Activated T-helper 1 cell treated with anti-CD3 and anti-CD28 coated beads, Interleukin-12 subunit alpha, Interleukin-12 subunit beta, Interleukin-2, Interleukin-4 antibody, amounts not matched to agents 30 ng/mL and 10 ng/mL and 1 ng/mL, durations not matched to agents 14 hours and 24 hours and 36 hours (primary cell): ENCODE measurements at regions of chr1 and their contacts with region 1.

Region 1: DNA sequence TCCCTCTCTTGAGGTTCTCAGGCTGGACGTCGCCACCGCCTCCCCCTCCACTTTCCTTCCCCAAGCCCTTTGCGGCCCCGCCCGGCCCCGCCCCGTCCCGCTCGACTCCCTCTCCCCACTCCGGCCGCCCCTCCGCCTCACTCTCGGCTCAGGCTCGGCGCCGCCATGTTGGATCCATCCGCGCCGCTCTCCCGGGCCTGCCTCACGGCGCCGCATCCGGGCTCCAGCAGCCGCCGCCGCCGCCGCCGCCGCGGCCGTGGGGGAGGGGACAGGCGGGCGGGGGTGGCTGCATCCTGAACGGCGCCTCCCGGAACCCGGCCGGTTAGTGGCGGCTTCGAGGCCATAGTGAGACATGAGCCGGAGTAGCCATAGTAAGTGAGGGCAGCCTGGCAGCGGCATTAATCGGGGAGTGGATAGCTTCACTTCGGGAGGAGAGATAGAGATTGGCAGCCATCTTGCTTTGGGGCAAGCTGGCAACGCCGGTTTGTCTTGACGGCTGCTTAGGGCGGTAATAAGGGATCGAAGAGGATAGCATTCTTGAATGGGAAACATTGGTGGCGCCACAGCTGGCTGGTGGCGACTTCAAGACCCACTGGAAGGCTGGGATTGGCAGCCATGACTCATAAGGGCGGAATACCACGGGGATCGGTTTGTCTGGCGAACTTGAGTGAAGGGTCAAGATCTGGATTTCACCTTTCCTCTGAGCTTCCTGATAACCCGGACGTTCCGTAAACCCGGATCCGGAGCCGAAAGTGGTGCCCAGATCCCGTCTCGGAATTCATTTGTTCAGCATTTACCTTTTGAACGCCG is at the start of gene DEDD:
- DNase-seq: peak; percentile 87
- H3K4me3 Mint-ChIP-seq: no peak within 1 kb of the TSS
- H3K27ac Mint-ChIP-seq: peak within 1 kb of the TSS; percentile 90
- H3K4me1 Mint-ChIP-seq: peaks cover 46% of the 10 kb centered on the region
- H3K27me3 Mint-ChIP-seq: no peaks in the 10 kb centered on the region
- total RNA-seq, gene DEDD: 44.5 and 48.0 TPM in 2 replicates

Region 2: DNA sequence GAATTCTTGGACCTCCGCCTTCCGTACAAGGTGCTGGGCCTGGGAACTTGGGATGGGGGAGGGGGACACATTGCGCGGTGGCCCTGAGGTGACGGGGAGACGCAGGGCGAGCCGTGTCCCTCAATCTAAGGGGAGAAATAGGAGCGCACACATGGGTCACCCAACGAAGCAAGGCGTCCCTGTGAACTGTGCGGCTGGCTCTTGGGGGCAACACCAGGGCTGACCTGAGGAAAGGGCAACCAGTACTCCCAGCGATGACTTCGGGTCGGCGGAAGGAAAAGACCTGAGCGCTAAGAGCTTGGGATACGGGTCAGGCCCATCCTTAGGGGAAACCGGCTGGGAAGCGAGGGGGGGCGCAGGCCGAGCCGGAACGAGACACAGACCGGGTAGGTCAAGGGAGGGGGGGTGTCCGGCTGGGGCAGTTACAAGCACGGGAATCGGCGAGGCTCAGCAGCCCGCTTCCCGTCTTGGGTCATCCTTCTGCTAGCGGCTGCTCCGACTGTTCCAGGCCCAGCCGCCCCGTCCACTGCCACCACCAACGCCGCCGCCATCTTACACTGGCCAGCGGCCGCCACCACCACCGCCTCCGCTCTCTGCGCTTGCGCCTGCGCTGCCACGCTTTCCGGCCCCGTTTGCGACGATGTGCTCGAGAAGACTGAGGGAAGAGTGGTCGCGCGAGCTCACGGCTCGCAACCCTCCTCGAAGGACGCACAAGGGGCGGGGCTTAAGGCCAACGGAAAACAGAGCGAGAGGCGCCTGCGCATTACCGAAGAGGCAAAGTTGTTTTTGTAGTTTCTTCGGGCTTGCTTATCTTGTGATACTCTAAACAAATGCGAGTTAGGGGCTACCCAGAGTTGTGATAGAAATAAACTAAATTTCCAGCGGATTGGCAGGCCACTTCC is 870.5 kb before region 1 on chr1 and contains the start of gene DCAF8:
- intact Hi-C with region 1: loop called (anchors 10 kb)
- DNase-seq: peak; percentile 98
- H3K4me3 Mint-ChIP-seq: peak within 1 kb of the TSS; percentile 95
- H3K27ac Mint-ChIP-seq: peak within 1 kb of the TSS; percentile 99
- H3K4me1 Mint-ChIP-seq: peaks cover 51% of the 10 kb centered on the region
- H3K27me3 Mint-ChIP-seq: no peaks in the 10 kb centered on the region
- total RNA-seq, gene DCAF8: 112 and 117 TPM in 2 replicates

Region 3: DNA sequence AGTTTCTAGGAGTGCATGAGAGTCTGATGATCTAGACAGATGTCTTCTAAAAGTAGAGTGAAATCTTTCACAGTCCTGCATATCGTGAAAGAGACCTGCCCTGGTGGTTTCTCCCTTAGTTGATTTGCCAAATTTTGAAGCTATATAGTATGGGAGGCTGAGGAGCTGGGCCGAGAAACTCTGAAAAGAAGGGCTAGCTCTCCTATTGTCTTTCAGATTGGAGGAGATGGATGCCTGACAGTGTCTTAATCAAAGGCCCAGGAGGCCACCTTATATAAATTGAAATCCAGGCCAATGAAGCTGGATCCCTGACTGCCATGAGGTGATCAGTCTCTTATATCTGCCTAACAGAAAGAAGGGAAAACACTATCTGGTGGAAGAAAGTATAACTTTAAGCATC is 534.9 kb before region 1 on chr1:
- intact Hi-C with region 1: no loop called
- DNase-seq: no peak
- H3K4me3 Mint-ChIP-seq: no peak overlapping the region
- H3K27ac Mint-ChIP-seq: no peak overlapping the region
- H3K4me1 Mint-ChIP-seq: peaks cover 6% of the 10 kb centered on the region
- H3K27me3 Mint-ChIP-seq: peaks cover 2% of the 10 kb centered on the region

Region 4: DNA sequence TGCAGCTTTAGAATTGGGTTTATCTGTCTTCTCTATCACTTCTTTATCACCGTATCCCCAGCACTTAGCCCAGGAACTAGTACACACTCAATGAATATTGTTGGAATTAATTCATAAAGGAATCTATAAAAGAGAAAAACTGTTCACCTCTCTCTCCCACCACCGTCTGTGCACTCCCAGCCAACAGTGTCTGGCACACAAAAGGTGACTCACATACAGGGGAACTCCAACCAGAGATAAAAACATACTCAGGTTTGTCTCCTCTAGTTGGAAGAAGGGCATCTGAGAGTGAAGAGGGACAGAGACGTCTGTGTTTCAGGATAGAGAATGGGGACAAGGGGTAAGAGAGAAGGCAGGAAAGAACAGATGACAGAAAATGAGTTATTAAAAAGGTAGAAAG is 257.7 kb before region 1 on chr1:
- intact Hi-C with region 1: no loop called
- DNase-seq: no peak
- H3K4me3 Mint-ChIP-seq: no peak overlapping the region
- H3K27ac Mint-ChIP-seq: no peak overlapping the region
- H3K4me1 Mint-ChIP-seq: peaks cover 16% of the 10 kb centered on the region
- H3K27me3 Mint-ChIP-seq: peaks cover 2% of the 10 kb centered on the region

Region 5: GRCh38 chr1:161071886-161072371 is 60.7 kb before region 1 on chr1:
- intact Hi-C with region 1: loop called (anchors 1 kb)
- DNase-seq: peak; percentile 24
- H3K4me3 Mint-ChIP-seq: no peak overlapping the region
- H3K27ac Mint-ChIP-seq: peak overlapping the region; percentile 47
- H3K4me1 Mint-ChIP-seq: peaks cover 49% of the 10 kb centered on the region
- H3K27me3 Mint-ChIP-seq: no peaks in the 10 kb centered on the region

Region 6: DNA sequence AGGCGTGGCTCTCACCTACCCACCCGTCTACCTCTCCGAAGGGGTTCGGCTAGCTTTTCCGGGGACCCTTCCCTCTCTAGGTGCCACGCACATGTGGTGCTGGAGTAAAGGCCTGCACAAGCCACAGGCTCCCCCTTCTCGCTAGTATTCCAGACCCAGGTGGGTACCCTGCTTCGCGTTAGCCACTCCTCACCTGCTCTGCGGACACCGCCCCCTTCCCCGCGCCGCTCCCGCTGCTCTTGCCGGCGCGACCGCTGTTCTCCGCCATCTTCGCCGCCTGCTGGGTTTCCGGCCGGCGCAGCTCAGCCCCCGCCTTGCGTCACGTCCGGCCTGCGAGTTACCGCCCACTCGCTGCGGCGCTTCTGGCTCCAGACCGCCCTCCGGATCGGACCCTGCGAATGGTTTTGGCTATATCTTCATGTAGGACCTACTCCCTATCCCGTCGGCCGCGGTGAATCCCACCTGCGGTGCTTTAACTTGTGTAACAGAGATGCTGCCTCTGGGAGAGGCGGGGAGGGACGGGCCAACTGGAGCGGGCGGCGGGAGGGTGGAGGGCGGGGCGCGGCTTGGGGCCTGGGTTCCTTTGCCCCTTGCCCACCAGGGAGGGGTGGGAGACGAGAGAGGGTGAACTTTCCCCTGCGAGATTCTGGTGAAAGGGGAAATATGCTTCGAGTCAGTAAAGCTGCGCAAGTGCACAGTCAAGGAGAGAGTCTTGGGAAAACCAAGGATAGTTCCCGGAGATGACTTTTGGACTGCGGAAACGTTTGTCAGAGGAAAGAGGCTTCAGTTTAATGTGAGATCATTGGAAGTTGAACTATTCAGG is 14.6 kb before region 1 on chr1 and contains the starts of genes NIT1 and PFDN2:
- intact Hi-C with region 1: loop called (anchors 1 kb)
- DNase-seq: peak; percentile 84
- H3K4me3 Mint-ChIP-seq: peak within 1 kb of the TSS; percentile 97
- H3K27ac Mint-ChIP-seq: peak within 1 kb of the TSS; percentile 96
- H3K4me1 Mint-ChIP-seq: peaks cover 75% of the 10 kb centered on the region
- H3K27me3 Mint-ChIP-seq: no peaks in the 10 kb centered on the region
- total RNA-seq, gene NIT1: 51.3 and 56.3 TPM in 2 replicates
- total RNA-seq, gene PFDN2: 147 and 164 TPM in 2 replicates

Region 7: DNA sequence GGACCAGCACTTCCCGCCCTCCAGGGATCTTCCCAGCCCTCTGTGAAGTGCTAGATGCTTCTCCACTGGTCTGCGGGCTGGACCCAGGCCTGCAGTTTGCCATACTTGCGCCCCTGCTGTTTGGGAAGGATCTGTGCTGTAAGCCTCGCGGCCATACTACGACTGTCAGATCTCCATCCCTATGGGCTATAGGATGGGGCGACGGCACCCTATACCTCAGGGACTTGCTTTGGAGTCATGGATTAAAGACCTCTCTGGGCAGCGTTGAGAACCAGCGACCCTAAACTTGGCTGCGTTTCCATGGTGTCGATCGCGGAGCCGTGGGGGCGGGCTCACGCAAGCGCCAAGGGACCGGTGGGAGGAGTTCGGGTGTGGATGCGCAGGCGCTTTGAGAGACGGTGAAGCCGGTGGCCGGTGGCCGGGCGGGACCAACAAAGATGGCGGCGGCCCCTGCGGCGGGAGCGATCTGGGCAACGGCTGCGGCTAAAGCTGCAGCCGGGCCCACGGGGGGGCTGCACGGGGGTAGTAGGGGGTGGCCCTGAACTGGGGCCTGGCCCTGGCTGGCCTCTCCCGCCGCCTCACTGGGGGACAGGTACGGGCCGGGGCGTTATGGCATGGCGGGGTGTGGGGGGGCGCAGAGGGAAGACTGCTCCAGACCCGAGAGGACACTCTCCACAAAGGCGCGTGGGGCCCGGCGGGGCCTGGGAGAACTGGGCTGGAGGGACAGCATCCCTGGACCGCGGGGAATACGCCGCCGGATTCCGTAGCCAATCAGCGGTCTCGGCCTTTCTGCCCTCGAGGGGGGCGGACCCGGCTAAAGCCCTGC is 26.7 kb after region 1 on chr1 and contains the start of gene USP21:
- intact Hi-C with region 1: loop called (anchors 1 kb)
- DNase-seq: peak; percentile 91
- H3K4me3 Mint-ChIP-seq: peak within 1 kb of the TSS; percentile 88
- H3K27ac Mint-ChIP-seq: peak within 1 kb of the TSS; percentile 86
- H3K4me1 Mint-ChIP-seq: peaks cover 64% of the 10 kb centered on the region
- H3K27me3 Mint-ChIP-seq: no peaks in the 10 kb centered on the region
- total RNA-seq, gene USP21: 32.9 and 38.2 TPM in 2 replicates

Region 8: GRCh38 chr1:161177112-161177935 is 44.7 kb after region 1 on chr1 and contains the start of gene B4GALT3:
- intact Hi-C with region 1: loop called (anchors 1 kb)
- DNase-seq: peak; percentile 91
- H3K4me3 Mint-ChIP-seq: peak within 1 kb of the TSS; percentile 98
- H3K27ac Mint-ChIP-seq: peak within 1 kb of the TSS; percentile 100
- H3K4me1 Mint-ChIP-seq: peaks cover 67% of the 10 kb centered on the region
- H3K27me3 Mint-ChIP-seq: no peaks in the 10 kb centered on the region
- total RNA-seq, gene B4GALT3: 66.4 and 68.2 TPM in 2 replicates